Sigmoid colon (tissue), 7 donors: ENCODE measurements at regions of chr3 and their contacts with region 1.

Region 1: GRCh38 chr3:63818281-63819150 is 583 bp upstream of the C3orf49 start:
- DNase-seq: peak; percentile 72
- H3K4me3 ChIP-seq: no peak overlapping the region
- H3K27ac ChIP-seq: no peak overlapping the region
- H3K4me1 ChIP-seq: peaks cover 0 to 3% (median 2%) of the 10 kb centered on the region in 4 donors
- H3K27me3 ChIP-seq: no peaks in the 10 kb centered on the region
- CTCF ChIP-seq: peak; percentile 45 to 86 (median 78)
- EP300 ChIP-seq: no peak
- POLR2A ChIP-seq: no peak

Region 2: DNA sequence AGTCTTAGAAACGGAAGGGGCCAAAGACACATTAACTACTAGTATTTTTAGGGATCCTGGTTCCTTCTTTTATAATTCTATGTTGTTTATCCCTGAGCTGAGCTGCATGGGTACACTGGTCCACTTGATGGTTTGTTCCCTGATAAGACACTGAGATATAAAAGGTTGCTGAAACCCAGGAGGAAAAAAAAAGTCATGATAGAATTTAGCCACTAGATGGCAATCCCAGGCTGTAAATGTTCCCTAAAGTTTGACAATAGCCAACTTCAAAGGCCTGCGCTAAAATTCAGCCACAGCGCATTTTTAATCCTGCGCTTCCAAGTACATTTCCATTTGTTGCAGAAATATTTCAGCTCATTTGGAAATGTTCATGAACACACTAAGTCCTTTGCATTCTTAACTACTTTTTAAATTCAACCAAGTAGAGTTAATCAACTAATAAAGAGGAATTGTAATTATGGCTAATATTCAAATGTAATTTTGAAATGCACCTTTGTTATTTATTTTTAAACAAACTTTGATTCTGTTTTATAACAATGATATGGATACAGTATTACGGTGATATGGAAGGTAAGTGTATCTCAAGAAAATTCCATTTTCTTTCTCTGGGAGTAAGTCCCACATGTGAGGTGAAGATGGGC is 1195.8 kb before region 1 on chr3:
- intact Hi-C with region 1: loop called (anchors 5 kb)
- DNase-seq: no peak
- H3K4me3 ChIP-seq: no peak overlapping the region
- H3K27ac ChIP-seq: no peak overlapping the region
- H3K4me1 ChIP-seq: no peaks in the 10 kb centered on the region
- H3K27me3 ChIP-seq: peaks cover 0 to 2% (median 0%) of the 10 kb centered on the region in 3 donors
- CTCF ChIP-seq: peak; percentile 14 to 61 (median 48)
- EP300 ChIP-seq: no peak
- POLR2A ChIP-seq: no peak

Region 3: DNA sequence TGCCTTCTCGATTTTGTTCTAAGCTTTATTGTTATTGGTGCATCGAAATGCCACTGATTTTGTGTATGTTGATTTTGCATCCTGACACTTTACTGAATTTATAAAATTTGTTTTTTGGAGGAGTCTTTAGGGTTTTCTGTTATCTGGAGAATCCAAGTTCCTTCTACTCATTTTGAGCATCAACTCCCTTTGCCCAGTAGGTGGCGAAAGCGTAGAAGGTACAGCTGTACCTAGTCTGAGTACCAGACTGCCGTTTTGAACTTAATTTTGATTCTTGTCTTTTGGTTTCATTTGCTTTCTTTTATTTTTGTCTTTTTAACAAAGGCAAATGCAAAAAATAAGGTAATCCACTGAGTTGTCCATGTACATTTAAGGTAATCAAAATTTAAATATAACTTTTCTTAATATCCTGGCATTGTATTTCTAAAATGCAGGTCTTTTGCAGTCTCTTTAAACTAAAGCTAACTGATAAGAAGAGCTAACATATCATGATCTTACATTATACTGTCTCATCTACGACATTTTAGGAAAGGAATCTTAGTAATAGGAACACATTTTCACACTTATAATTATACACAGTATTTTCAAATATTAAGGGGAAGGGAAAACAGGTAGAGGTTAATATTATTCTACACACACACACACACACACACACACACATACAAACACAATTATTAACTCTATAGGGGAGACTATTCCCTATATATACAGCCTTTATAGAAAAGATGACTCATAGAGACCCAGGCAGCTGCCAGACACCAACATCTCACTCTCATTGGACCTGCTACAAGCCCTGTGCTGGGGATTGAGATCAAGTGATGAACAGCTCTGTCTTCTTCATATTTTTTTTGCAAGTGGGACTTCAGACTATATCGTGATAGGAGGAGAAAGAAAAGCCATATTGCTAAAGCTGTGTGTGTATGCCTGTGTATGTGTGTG is 468.7 kb before region 1 on chr3:
- intact Hi-C with region 1: loop called (anchors 5 kb)
- DNase-seq: no peak
- H3K4me3 ChIP-seq: no peak overlapping the region
- H3K27ac ChIP-seq: no peak overlapping the region
- H3K4me1 ChIP-seq: no peaks in the 10 kb centered on the region
- H3K27me3 ChIP-seq: peaks cover 0 to 16% (median 0%) of the 10 kb centered on the region in 3 donors
- CTCF ChIP-seq: peak in 3 of 4 experiments; percentile 41 to 55 (median 54)
- EP300 ChIP-seq: no peak
- POLR2A ChIP-seq: no peak

Region 4: DNA sequence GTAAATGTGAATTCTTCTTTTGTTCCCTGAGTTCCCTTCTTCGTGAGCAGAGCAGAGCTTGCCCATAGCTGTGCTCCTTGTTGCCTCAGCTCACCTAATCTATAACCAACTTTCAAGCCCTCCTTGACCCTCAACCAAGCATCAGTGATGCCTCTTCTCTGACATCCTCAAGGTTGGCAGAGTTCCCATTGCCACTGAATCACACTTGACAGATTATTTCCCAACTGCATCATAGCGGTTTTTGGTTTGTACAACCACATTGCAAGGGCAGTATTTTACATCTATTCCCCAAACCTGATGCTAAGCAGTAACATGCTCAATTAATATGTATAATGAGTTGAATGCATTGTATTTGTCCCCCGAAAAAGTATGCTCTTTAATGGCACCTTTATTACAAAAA is 299.1 kb before region 1 on chr3:
- intact Hi-C with region 1: no loop called
- DNase-seq: no peak
- H3K4me3 ChIP-seq: no peak overlapping the region
- H3K27ac ChIP-seq: no peak overlapping the region
- H3K4me1 ChIP-seq: no peaks in the 10 kb centered on the region
- H3K27me3 ChIP-seq: no peaks in the 10 kb centered on the region
- CTCF ChIP-seq: no peak
- EP300 ChIP-seq: no peak
- POLR2A ChIP-seq: no peak